Activated CD8-positive, alpha-beta T cell treated with anti-CD3 and anti-CD28 coated beads, Interleukin-2, amount 10 ng/mL, durations not matched to agents 7 days and 5 days (primary cell): ENCODE measurements at regions of chr12 and their contacts with region 1.

Region 1: DNA sequence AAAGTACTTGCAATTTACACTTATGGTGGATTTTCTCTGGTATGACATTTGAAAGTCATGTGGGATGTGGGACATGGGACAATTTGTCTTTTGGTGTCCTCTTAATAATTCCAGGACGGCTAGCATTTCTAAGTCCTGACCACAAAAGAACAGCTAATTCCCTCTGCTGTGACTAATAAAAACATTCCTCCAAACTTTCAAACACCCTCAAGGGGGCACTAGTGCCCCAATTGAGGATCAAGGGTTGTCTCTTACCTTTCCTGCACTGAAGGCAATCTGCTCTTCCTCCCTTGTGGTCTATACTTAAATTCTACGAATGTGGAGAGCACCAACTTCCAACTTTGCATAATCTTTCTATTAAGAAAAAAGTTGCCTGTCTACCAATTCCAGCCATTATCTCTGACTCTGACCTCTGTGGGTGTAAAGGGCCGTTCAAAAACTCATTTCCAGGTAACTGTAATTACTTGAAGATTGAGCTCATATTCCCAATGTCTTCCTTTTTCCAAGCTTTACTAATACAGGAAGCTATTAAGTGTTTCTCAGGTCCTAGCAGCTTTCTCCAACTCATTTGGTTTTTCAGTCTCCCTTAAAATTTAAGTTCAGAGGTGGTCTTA is 210.2 kb downstream of the PTPRO start:
- DNase-seq: peak; percentile 61
- ATAC-seq: peak; percentile 59
- H3K4me3 Mint-ChIP-seq: no peak overlapping the region
- H3K27ac Mint-ChIP-seq: peak overlapping the region; percentile 68
- H3K4me1 Mint-ChIP-seq: no peaks in the 10 kb centered on the region
- H3K27me3 Mint-ChIP-seq: peaks cover 17% of the 10 kb centered on the region

Region 2: DNA sequence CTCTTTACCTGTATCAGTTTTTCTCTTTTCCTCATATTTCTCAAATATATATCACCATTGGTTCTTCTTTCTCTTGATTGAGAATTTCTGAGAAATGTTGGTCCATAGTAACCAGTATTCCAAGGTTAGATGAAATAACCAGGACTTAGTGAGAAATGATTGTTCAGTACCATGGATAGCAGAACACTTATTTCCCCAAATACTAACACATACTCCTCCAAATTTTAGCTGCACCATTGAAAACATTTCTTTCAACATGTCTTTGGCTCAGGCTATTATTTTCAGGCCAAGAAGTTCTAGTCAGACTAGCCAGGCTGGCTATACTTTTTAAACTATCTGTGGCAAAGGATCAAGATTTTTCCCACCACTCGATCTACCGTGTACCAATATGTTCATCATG is 96.9 kb before region 1 on chr12:
- CTCF ChIA-PET with region 1: no interaction called
- POLR2A ChIA-PET with region 1: no interaction called
- DNase-seq: no peak
- ATAC-seq: no peak
- H3K4me3 Mint-ChIP-seq: no peak overlapping the region
- H3K27ac Mint-ChIP-seq: no peak overlapping the region
- H3K4me1 Mint-ChIP-seq: no peaks in the 10 kb centered on the region
- H3K27me3 Mint-ChIP-seq: peaks cover 2% of the 10 kb centered on the region

Region 3: GRCh38 chr12:15546102-15546701 is 13.7 kb after region 1 on chr12:
- CTCF ChIA-PET with region 1: interaction called, 105 read pairs
- POLR2A ChIA-PET with region 1: interaction called, 12 read pairs
- DNase-seq: peak; percentile 33
- ATAC-seq: peak; percentile 82
- H3K4me3 Mint-ChIP-seq: peak overlapping the region; percentile 39
- H3K27ac Mint-ChIP-seq: peak overlapping the region; percentile 83
- H3K4me1 Mint-ChIP-seq: peaks cover 35% of the 10 kb centered on the region
- H3K27me3 Mint-ChIP-seq: no peaks in the 10 kb centered on the region

Region 4: GRCh38 chr12:15563663-15564062 is 31.2 kb after region 1 on chr12:
- CTCF ChIA-PET with region 1: interaction called, 138 read pairs
- POLR2A ChIA-PET with region 1: interaction called, 7 read pairs
- DNase-seq: peak; percentile 46
- ATAC-seq: peak; percentile 71
- H3K4me3 Mint-ChIP-seq: peak overlapping the region; percentile 51
- H3K27ac Mint-ChIP-seq: peak overlapping the region; percentile 91
- H3K4me1 Mint-ChIP-seq: peaks cover 57% of the 10 kb centered on the region
- H3K27me3 Mint-ChIP-seq: no peaks in the 10 kb centered on the region

Region 5: GRCh38 chr12:15575671-15576541 is 43.4 kb after region 1 on chr12:
- CTCF ChIA-PET with region 1: interaction called, 720 read pairs
- POLR2A ChIA-PET with region 1: interaction called, 9 read pairs
- DNase-seq: no peak
- ATAC-seq: peak; percentile 54
- H3K4me3 Mint-ChIP-seq: no peak overlapping the region
- H3K27ac Mint-ChIP-seq: no peak overlapping the region
- H3K4me1 Mint-ChIP-seq: peaks cover 32% of the 10 kb centered on the region
- H3K27me3 Mint-ChIP-seq: no peaks in the 10 kb centered on the region

Region 6: GRCh38 chr12:15590180-15590826 is 57.8 kb after region 1 on chr12:
- CTCF ChIA-PET with region 1: interaction called, 720 read pairs
- POLR2A ChIA-PET with region 1: interaction called, 3 read pairs
- DNase-seq: peak; percentile 72
- ATAC-seq: peak; percentile 97
- H3K4me3 Mint-ChIP-seq: peak overlapping the region; percentile 65
- H3K27ac Mint-ChIP-seq: peak overlapping the region; percentile 62
- H3K4me1 Mint-ChIP-seq: peaks cover 14% of the 10 kb centered on the region
- H3K27me3 Mint-ChIP-seq: peaks cover under 1% of the 10 kb centered on the region

Region 7: DNA sequence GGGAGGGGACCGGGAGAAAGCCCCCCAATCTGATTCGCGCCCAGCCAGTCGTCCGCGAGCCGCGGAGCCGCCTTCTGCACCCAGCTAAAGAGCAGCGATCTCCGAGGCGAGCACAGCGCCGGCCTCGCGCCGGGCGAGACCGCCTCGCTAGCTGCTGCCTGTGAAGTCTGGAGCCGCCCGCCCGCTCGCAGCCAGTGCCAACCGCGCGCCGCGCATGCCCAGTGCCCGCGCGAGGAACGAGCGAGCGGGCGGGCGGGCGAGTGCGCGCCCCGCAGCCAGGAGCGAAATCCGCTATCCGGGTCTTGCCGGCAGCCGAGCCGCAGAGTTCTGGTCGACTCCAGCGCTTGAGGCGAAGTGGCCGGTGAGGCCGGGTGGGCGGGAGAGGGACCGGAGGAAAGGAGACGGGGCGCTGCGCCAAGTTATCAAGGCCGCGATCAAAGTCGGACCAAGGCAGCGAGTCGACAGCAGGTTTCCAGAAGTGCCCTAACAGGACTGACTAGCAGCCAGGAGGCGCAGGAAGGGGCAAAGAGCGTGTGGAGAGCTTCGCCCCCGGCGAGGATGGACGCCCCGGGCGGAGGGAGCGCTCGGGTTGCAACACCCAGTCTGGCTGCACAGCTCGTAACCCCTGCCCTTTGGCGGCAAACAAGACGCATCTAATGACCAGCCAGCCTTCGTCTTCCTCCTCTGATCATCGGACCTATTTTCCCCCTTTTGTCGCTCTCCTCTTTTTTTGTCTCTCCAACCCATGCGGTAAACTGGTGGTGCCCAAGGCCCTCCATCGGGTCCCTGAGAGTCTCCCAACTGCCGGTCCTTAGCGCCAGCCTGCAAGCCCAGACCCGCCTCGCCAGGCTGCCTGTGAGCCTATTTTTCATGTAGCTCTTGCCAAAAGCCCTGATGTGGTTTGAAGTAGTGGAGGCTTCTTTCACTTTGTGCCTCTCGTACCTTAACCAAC is 257.0 kb after region 1 on chr12 and contains the start of gene EPS8:
- CTCF ChIA-PET with region 1: interaction called, 16 read pairs
- POLR2A ChIA-PET with region 1: no interaction called
- DNase-seq: peak; percentile 89
- ATAC-seq: peak; percentile 98
- H3K4me3 Mint-ChIP-seq: peak within 1 kb of the TSS; percentile 85
- H3K27ac Mint-ChIP-seq: peak within 1 kb of the TSS; percentile 79
- H3K4me1 Mint-ChIP-seq: peaks cover 17% of the 10 kb centered on the region
- H3K27me3 Mint-ChIP-seq: peaks cover 55% of the 10 kb centered on the region
- total RNA-seq, gene EPS8: 1.0 to 2.2 TPM

Region 8: DNA sequence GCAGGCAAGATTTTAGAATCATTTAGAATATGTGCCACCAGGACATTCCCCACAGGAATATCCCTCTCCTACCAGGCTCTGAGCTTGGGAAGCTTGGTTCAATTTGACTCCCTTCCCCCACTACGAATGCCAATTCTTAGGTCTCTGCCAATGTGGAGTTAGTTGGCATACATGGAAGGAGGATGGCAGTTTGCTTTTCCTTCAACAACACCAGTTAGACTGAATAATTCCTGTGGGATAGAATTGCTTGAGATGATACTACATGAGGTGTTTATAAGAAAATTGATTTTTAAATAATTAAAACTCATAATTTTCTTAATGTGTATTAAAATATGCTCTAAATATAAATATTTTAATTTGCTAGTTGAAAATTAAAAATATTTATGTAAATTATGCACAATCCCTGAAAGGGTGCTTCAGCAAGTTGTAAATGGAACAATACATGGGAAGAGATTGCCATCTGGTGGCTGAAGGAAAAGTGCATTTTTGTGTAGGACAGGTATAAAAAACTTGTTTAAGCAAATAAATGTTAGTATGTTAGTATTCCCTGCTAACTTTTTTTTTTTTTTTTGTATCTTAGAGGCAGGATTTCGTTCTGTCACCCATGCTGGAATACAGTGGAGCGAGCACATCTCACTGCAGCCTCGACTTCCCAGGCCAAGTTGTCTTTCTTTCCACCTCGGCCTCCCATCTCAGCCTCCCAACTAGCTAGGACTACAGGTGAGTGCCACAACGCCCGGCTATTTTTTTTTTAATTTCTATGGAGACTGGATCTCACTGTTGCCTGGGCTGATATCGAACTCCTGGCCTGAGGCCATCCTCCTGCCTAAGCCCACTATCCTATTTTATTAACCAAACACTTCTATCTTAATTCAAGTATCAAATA is 323.9 kb after region 1 on chr12:
- CTCF ChIA-PET with region 1: interaction called, 16 read pairs
- POLR2A ChIA-PET with region 1: no interaction called
- DNase-seq: peak; percentile 69
- ATAC-seq: peak; percentile 65
- H3K4me3 Mint-ChIP-seq: no peak overlapping the region
- H3K27ac Mint-ChIP-seq: no peak overlapping the region
- H3K4me1 Mint-ChIP-seq: no peaks in the 10 kb centered on the region
- H3K27me3 Mint-ChIP-seq: peaks cover 16% of the 10 kb centered on the region